Activated CD8-positive, alpha-beta memory T cell treated with anti-CD3 and anti-CD28 coated beads, Interleukin-2, amount 10 ng/mL, durations not matched to agents 7 days and 5 days (primary cell): ENCODE measurements at regions of chr3 and their contacts with region 1.

Region 1: DNA sequence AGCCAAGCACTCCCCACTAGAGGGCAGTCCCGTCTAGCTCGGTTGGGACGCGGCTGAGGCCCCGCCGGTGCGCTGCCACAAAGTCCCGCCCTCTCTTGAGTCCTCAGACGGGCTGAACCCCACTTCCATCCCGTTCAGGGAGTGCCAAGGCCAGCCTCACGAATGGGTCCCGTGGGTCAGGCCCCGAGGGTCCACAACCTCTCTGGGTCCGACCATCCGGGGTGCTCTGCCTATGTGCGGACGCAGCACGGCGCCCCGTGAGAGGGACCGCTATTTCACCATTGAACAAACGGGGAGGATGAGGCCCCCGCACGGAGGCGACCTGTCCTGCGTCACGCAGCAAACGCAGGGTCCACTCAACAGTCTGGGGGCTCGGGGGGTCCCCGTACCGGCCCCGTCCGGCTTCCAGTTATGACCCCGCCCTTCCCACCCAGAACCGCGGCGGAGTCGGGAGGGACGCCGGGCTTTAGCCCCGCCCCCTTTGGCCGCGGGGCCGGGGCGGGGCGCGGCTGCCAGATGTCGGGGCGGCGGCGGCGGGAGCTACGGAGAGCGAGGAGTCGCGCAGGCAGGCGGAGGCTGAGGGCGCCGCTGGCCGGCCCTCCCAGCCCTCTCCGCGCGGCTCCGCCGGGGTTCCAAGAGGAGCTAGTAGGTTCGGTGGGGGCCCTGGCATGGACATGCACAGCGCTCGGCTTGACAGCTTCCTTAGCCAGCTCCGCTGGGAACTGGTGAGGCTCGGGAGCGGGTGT is at the start of gene INKA1:
- DNase-seq: peak; percentile 93
- ATAC-seq: peak; percentile 89
- H3K4me3 Mint-ChIP-seq: peak within 1 kb of the TSS; percentile 80
- H3K27ac Mint-ChIP-seq: peak within 1 kb of the TSS; percentile 76
- H3K4me1 Mint-ChIP-seq: peaks cover 31% of the 10 kb centered on the region
- H3K27me3 Mint-ChIP-seq: peaks cover 11% of the 10 kb centered on the region
- total RNA-seq, gene INKA1: 0.73 to 0.85 TPM

Region 2: GRCh38 chr3:49616491-49616941 is 186.4 kb before region 1 on chr3:
- CTCF ChIA-PET with region 1: no interaction called
- DNase-seq: no peak
- ATAC-seq: no peak
- H3K4me3 Mint-ChIP-seq: no peak overlapping the region
- H3K27ac Mint-ChIP-seq: no peak overlapping the region
- H3K4me1 Mint-ChIP-seq: peaks cover 3% of the 10 kb centered on the region
- H3K27me3 Mint-ChIP-seq: peaks cover 13% of the 10 kb centered on the region

Region 3: GRCh38 chr3:49703443-49703927 is 99.4 kb before region 1 on chr3:
- CTCF ChIA-PET with region 1: interaction called, 10 read pairs
- DNase-seq: peak; percentile 82
- ATAC-seq: peak; percentile 95
- H3K4me3 Mint-ChIP-seq: no peak overlapping the region
- H3K27ac Mint-ChIP-seq: no peak overlapping the region
- H3K4me1 Mint-ChIP-seq: no peaks in the 10 kb centered on the region
- H3K27me3 Mint-ChIP-seq: no peaks in the 10 kb centered on the region

Region 4: GRCh38 chr3:49813497-49814174 is 10.7 kb after region 1 on chr3 and contains the start of gene UBA7:
- CTCF ChIA-PET with region 1: interaction called, 86 read pairs
- DNase-seq: peak; percentile 68
- ATAC-seq: peak; percentile 95
- H3K4me3 Mint-ChIP-seq: peak within 1 kb of the TSS; percentile 96
- H3K27ac Mint-ChIP-seq: peak within 1 kb of the TSS; percentile 97
- H3K4me1 Mint-ChIP-seq: peaks cover 23% of the 10 kb centered on the region
- H3K27me3 Mint-ChIP-seq: no peaks in the 10 kb centered on the region
- total RNA-seq, gene UBA7: 149 to 212 TPM

Region 5: GRCh38 chr3:49839193-49839809 is 36.4 kb after region 1 on chr3:
- CTCF ChIA-PET with region 1: interaction called, 261 read pairs
- DNase-seq: peak; percentile 87
- ATAC-seq: peak; percentile 91
- H3K4me3 Mint-ChIP-seq: no peak overlapping the region
- H3K27ac Mint-ChIP-seq: no peak overlapping the region
- H3K4me1 Mint-ChIP-seq: peaks cover 1% of the 10 kb centered on the region
- H3K27me3 Mint-ChIP-seq: no peaks in the 10 kb centered on the region

Region 6: GRCh38 chr3:49899815-49900214 is 96.9 kb after region 1 on chr3:
- CTCF ChIA-PET with region 1: interaction called, 25 read pairs
- DNase-seq: no peak
- ATAC-seq: no peak
- H3K4me3 Mint-ChIP-seq: no peak overlapping the region
- H3K27ac Mint-ChIP-seq: no peak overlapping the region
- H3K4me1 Mint-ChIP-seq: peaks cover 15% of the 10 kb centered on the region
- H3K27me3 Mint-ChIP-seq: no peaks in the 10 kb centered on the region